ENCODE measurements at regions of chr5 and their contacts with region 1.

Region 1: DNA sequence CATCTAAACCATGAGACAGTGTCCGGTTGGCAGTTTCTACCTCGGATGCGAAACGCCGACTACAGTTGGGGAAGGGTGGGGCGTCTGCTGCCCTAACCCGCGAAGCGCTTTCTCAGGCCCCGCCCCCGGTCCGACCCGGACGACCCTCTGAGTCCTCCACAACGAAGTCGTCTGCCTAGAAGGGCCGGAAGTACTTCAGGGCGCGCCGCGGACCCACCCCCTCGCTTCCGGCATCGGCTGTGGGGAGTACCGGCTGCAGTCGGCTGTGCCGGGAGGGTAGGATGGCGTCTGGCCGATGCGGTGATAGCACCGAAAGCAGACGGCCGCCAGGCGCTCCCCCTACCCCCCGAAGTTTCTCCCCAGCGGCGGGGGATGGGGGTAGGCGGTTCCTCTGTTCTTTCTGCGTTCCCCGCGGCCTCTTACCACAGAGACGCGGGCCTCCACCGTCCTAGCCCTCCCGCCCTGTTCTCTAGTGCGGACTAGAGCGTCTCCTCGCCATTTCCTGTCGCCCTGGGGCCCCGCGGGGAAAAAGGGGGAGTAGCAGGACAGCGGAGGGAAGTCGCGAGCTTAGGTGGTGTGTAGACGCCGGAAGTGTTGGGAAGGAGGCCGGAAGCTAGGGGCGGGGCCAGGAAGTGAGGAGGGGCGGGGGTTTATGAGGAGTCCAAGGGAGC is at the start of gene TRIM41:
- DNase-seq: peak; percentile 99 to 100
- H3K4me3 ChIP-seq: peak within 1 kb of the TSS; percentile 68 to 95
- H3K27ac ChIP-seq: peak within 1 kb of the TSS; percentile 89 to 94
- H3K4me1 ChIP-seq: peaks cover 6 to 25% (median 14%) of the 10 kb centered on the region in 4 donors
- H3K27me3 ChIP-seq: no peaks in the 10 kb centered on the region
- CTCF ChIP-seq: no peak

Region 2: GRCh38 chr5:180908998-180909731 is 314.0 kb before region 1 on chr5:
- intact Hi-C with region 1: no loop called
- DNase-seq: no peak
- H3K4me3 ChIP-seq: no peak overlapping the region
- H3K27ac ChIP-seq: no peak overlapping the region
- H3K4me1 ChIP-seq: no peaks in the 10 kb centered on the region
- H3K27me3 ChIP-seq: no peaks in the 10 kb centered on the region
- CTCF ChIP-seq: no peak

Region 3: GRCh38 chr5:181187500-181188213 is 35.5 kb before region 1 on chr5:
- intact Hi-C with region 1: loop called (anchors 2 kb)
- DNase-seq: peak; percentile 78 to 89
- H3K4me3 ChIP-seq: peak overlapping the region; percentile 93 to 96
- H3K27ac ChIP-seq: peak overlapping the region; percentile 93 to 96
- H3K4me1 ChIP-seq: peaks cover 0 to 22% (median 21%) of the 10 kb centered on the region in 4 donors
- H3K27me3 ChIP-seq: no peaks in the 10 kb centered on the region
- CTCF ChIP-seq: peak in 1 of 2 experiments; percentile 18